ENCODE measurements at regions of chr3 and their contacts with region 1.

Region 1: DNA sequence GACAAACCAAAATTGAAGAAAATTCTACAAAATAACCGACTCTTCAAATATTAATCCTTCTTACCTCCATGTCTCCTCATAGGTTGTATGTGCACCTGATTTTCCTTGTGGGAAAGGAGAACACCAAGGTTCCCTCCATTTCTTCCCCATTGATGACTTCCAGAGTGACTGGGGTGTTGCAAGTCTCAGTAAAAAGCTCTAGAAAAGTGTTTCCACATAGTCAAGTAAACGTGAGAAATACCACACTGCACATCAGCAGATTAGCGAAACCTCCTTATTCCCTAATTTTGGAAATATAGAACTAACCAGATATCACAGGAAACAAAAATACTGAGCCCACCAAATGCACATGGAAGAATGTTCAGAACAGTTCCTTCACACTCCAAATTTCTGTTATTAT is 4.9 kb upstream of the RPN1 start:
- DNase-seq: no peak
- ATAC-seq: no peak
- H3K4me3 ChIP-seq: no peak overlapping the region
- H3K4me3 Mint-ChIP-seq: peak overlapping the region; percentile 29
- H3K27ac ChIP-seq: no peak overlapping the region
- H3K27ac Mint-ChIP-seq: no peak overlapping the region
- H3K4me1 ChIP-seq: peaks cover 9% of the 10 kb centered on the region
- H3K4me1 Mint-ChIP-seq: peaks cover 10 to 11% of the 10 kb centered on the region in 2 donors
- H3K27me3 ChIP-seq: no peaks in the 10 kb centered on the region
- H3K27me3 Mint-ChIP-seq: no peaks in the 10 kb centered on the region
- CTCF ChIP-seq: no peak

Region 2: DNA sequence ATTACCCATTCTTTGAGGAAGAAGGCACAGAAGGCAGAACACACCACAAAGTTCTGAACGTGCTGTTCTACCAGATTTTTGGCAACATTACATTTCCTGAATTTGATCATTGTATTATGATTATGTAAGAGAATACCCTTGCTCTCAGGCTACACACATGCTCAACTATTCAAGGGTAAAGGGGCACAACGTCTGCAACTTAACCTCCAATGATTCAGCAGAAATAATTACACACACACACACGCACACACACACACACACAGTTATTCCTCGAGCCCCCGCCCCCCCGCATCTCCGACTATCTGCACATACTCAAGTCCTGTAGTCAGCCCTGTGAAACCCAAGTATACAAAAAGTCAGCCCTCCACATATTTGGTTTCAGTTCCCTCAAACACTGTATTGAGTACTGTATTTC is 31.8 kb before region 1 on chr3:
- intact Hi-C with region 1: loop called (anchors 1 kb)
- DNase-seq: no peak
- ATAC-seq: no peak
- H3K4me3 ChIP-seq: no peak overlapping the region
- H3K4me3 Mint-ChIP-seq: no peak overlapping the region
- H3K27ac ChIP-seq: no peak overlapping the region
- H3K27ac Mint-ChIP-seq: no peak overlapping the region
- H3K4me1 ChIP-seq: peaks cover 2% of the 10 kb centered on the region
- H3K4me1 Mint-ChIP-seq: peaks cover 11 to 33% of the 10 kb centered on the region in 2 donors
- H3K27me3 ChIP-seq: no peaks in the 10 kb centered on the region
- H3K27me3 Mint-ChIP-seq: no peaks in the 10 kb centered on the region
- CTCF ChIP-seq: no peak